ENCODE measurements at regions of chr2 and their contacts with region 1.

Region 1: DNA sequence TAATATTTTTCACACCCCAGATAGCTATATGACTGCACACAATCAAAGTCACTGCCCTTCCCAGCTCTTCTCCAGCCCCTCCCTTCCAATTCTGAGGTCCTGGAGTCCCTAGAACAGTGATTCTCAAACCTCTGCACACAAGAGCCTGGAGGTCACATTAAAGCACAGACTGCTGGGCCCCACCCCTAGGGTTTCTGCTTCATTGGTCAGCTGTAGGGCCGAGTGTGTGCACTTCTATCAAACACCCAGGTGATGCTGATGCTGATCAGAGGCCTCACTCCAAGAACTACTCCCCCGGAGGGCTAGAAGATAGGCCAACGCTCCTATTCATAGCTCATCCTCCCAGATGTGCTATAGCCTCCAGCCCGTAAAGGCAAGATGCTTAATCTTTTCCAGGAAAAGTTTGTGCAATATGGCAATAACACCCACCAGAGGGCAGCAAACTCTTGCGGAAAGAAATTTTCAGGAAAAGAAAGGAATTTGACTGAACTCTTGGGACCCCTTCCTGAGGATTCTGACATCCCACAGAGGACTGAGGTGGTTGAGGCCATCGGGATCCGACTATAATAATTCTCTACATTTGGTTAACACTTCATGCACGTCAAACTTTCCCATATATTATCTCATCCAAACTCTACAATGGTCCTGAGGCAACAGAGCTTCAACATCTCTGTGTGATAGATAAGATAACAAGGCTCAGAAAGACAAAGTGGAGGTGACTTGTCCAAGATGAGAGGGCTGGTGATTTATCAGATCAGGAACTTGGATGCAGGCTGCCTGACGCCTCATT is 194.2 kb upstream of the PKDCC start:
- DNase-seq: no peak
- H3K4me3 Mint-ChIP-seq: no peak overlapping the region
- H3K27ac Mint-ChIP-seq: no peak overlapping the region
- H3K4me1 Mint-ChIP-seq: peaks cover 12% of the 10 kb centered on the region
- H3K27me3 Mint-ChIP-seq: peaks cover 13% of the 10 kb centered on the region

Region 2: DNA sequence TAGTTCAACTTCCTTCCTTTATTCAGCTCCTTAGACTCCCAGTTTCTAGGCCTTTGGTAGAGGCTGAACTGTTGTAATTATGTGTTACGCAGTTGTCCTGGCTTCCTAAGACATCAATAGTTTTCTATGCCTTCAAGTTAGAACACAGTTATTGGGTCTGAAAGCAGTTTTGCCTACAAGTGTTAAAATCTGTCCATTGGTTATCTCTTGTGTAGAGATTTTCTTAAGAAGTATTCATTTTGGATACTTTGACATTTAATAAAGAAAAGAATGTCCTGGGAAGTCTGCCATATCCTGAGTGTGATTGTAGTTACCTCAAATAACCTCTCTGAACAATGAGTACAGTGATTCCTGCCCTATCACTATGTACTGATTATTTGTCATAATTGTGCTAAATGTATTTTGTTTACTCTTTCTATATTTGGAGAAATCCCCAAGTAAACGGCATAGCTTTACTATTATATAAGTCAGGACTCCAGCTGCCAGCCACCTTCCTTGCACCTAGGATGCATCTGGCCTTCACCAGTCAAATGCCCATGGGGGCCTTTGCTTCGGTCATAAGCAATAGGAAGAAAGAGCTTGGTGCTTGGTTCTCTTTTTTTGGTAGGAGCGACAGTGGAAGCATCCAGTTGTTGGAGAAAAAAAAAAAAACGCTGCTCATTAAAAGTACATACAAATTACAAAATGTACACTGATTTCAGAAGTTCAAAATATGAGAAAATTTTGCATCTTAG is 255.3 kb before region 1 on chr2:
- CTCF ChIA-PET with region 1: no interaction called
- POLR2A ChIA-PET with region 1: no interaction called
- intact Hi-C with region 1: no loop called
- DNase-seq: no peak
- H3K4me3 Mint-ChIP-seq: no peak overlapping the region
- H3K27ac Mint-ChIP-seq: no peak overlapping the region
- H3K4me1 Mint-ChIP-seq: no peaks in the 10 kb centered on the region
- H3K27me3 Mint-ChIP-seq: no peaks in the 10 kb centered on the region

Region 3: DNA sequence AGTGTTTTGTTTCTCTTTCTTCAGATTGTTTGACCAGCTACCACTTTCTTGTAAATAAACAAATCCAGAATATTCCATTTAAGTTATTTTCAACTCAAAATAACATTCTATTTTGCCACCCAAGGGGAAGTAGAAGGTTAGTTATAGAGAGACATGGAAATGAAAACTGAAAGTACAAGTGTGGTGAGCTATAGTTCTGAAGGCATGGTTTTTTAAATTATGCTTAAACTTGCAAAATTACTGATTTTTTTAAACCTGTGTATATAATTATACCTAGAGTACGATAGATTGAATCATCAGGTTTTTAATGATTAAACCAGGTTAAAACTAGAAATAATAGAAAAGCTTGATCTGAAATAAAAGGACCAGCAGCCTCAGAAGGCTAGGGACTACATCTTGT is 133.3 kb before region 1 on chr2:
- CTCF ChIA-PET with region 1: no interaction called
- POLR2A ChIA-PET with region 1: no interaction called
- intact Hi-C with region 1: no loop called
- DNase-seq: no peak
- H3K4me3 Mint-ChIP-seq: no peak overlapping the region
- H3K27ac Mint-ChIP-seq: no peak overlapping the region
- H3K4me1 Mint-ChIP-seq: peaks cover 6% of the 10 kb centered on the region
- H3K27me3 Mint-ChIP-seq: no peaks in the 10 kb centered on the region

Region 4: GRCh38 chr2:41840702-41841551 is 12.7 kb before region 1 on chr2:
- CTCF ChIA-PET with region 1: interaction called, 26 read pairs
- POLR2A ChIA-PET with region 1: interaction called, 3 read pairs
- intact Hi-C with region 1: loop called (anchors 1 kb)
- DNase-seq: peak; percentile 99
- H3K4me3 Mint-ChIP-seq: peak overlapping the region; percentile 85
- H3K27ac Mint-ChIP-seq: peak overlapping the region; percentile 81
- H3K4me1 Mint-ChIP-seq: peaks cover 6% of the 10 kb centered on the region
- H3K27me3 Mint-ChIP-seq: peaks cover 8% of the 10 kb centered on the region

Region 5: GRCh38 chr2:42238644-42239288 is 385.1 kb after region 1 on chr2:
- CTCF ChIA-PET with region 1: no interaction called
- POLR2A ChIA-PET with region 1: no interaction called
- intact Hi-C with region 1: loop called (anchors 10 kb)
- DNase-seq: peak; percentile 66
- H3K4me3 Mint-ChIP-seq: no peak overlapping the region
- H3K27ac Mint-ChIP-seq: no peak overlapping the region
- H3K4me1 Mint-ChIP-seq: peaks cover 77% of the 10 kb centered on the region
- H3K27me3 Mint-ChIP-seq: no peaks in the 10 kb centered on the region